Esophagus squamous epithelium (tissue), 5 donors: ENCODE measurements at regions of chr4 and their contacts with region 1.

Region 1: DNA sequence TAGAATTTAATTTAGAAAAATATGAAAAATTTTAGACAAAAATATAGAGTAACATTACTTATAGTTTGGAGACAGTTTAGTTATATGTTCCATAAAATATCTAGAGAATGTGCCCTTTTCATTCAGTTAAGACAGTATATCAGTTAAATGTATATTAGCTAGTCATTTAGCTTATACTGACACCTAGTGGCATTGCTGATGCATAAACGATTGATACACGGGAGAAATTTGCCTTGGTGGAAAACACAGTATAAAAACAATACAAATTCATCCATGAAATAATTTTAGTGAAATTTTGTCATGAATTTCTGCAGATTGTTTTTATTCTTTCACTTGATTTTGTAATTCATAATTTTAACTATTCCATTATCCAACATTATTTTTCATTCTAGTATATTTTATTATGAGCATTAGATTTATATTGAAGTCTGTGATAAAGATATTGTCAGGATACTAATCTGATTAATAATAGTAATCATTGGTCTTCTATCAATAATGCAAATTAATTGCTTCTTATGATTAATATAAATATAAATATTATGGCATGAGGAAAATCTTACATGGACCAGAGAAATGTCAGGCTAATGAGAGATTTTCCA is 219.0 kb downstream of the TLL1 start:
- DNase-seq: no peak
- H3K4me3 ChIP-seq: no peak overlapping the region
- H3K27ac ChIP-seq: no peak overlapping the region
- H3K4me1 ChIP-seq: no peaks in the 10 kb centered on the region
- H3K27me3 ChIP-seq: no peaks in the 10 kb centered on the region
- CTCF ChIP-seq: peak; percentile 40 to 81 (median 55)
- POLR2A ChIP-seq: no peak

Region 2: GRCh38 chr4:165493359-165493758 is 598.7 kb before region 1 on chr4:
- intact Hi-C with region 1: loop called (anchors 5 kb)
- DNase-seq: no peak
- H3K4me3 ChIP-seq: peak overlapping the region in 1 of 4 donors; percentile 37
- H3K27ac ChIP-seq: no peak overlapping the region
- H3K4me1 ChIP-seq: peaks cover 0 to 18% (median 0%) of the 10 kb centered on the region in 3 donors
- H3K27me3 ChIP-seq: no peaks in the 10 kb centered on the region
- CTCF ChIP-seq: peak in 5 of 6 experiments; percentile 61 to 80 (median 65)
- POLR2A ChIP-seq: no peak